Sigmoid colon (tissue), 7 donors: ENCODE measurements at regions of chrX and their contacts with region 1.

Region 1: GRCh38 chrX:57821703-57822375 is 88.4 kb downstream of the ZXDA start:
- DNase-seq: no peak
- H3K4me3 ChIP-seq: peak overlapping the region in 1 of 4 donors; percentile 24
- H3K27ac ChIP-seq: no peak overlapping the region
- H3K4me1 ChIP-seq: no peaks in the 10 kb centered on the region
- H3K27me3 ChIP-seq: no peaks in the 10 kb centered on the region
- CTCF ChIP-seq: peak; percentile 50 to 59 (median 58)
- EP300 ChIP-seq: no peak
- POLR2A ChIP-seq: no peak

Region 2: GRCh38 chrX:57587607-57588006 is 234.2 kb before region 1 on chrX:
- intact Hi-C with region 1: loop called (anchors 5 kb)
- DNase-seq: no peak
- H3K4me3 ChIP-seq: no peak overlapping the region
- H3K27ac ChIP-seq: no peak overlapping the region
- H3K4me1 ChIP-seq: peaks cover 0 to 9% (median 4%) of the 10 kb centered on the region in 4 donors
- H3K27me3 ChIP-seq: no peaks in the 10 kb centered on the region
- CTCF ChIP-seq: no peak
- EP300 ChIP-seq: no peak
- POLR2A ChIP-seq: no peak

Region 3: DNA sequence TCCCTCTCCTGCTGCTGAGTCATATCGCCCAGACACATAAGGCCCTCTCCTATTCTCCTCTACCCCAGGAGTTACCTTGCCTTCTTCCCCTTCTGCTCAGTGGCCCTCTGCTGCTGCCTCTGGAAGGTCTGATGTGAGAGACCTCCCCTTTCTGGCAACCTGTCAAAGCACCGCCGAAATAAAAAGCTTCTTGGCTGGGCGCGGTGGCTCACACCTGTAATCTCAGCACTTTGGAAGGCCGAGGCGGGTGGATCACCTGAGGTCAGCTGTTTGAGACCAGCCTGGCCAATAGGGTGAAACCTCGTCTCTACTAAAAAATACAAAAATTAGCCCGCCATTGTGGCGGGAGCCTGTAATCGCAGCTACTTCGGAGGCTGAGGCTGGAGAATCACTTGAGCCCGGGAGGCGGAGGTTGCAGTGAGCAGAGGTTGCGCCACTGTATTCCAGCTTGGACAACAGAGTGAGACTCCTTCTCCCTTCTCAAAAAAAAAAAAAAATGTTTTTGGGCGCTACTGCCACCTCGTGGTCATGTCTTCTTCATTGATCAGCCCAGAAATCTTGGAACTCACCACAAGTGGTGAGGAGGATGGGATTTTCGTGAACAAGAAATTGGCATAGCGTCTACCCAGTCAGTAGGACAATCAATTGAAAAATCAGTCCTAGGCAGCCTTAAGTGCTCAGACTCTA is 97.1 kb after region 1 on chrX:
- intact Hi-C with region 1: loop called (anchors 2 kb)
- DNase-seq: no peak
- H3K4me3 ChIP-seq: no peak overlapping the region
- H3K27ac ChIP-seq: no peak overlapping the region
- H3K4me1 ChIP-seq: no peaks in the 10 kb centered on the region
- H3K27me3 ChIP-seq: no peaks in the 10 kb centered on the region
- CTCF ChIP-seq: peak in 3 of 4 experiments; percentile 5 to 49 (median 17)
- EP300 ChIP-seq: no peak
- POLR2A ChIP-seq: no peak

Region 4: DNA sequence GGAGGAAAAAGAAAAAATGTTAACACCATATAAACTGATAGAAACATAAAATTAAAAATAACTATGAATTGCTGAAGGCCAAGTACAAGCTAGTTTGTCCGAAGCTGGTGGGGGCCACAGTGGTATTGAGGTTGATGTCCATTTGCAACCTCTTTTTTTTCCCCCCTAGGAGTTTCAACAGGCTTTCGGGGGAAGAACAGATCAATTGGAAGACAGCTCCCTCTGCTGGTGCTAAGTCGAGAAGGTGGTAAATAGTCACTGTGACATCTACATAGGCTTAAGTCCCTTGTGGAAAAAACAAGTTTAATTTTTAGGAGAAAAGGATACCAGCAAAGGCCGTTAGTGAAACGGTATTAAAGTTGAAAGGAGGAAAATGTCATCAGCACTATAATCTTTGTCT is 204.1 kb after region 1 on chrX:
- intact Hi-C with region 1: loop called (anchors 5 kb)
- DNase-seq: no peak
- H3K4me3 ChIP-seq: no peak overlapping the region
- H3K27ac ChIP-seq: no peak overlapping the region
- H3K4me1 ChIP-seq: no peaks in the 10 kb centered on the region
- H3K27me3 ChIP-seq: peaks cover 0 to 3% (median 0%) of the 10 kb centered on the region in 3 donors
- CTCF ChIP-seq: peak in 1 of 4 experiments; percentile 29
- EP300 ChIP-seq: no peak
- POLR2A ChIP-seq: no peak